ENCODE measurements at regions of chr16 and their contacts with region 1.

Region 1: GRCh38 chr16:85986931-85987749 is 88.2 kb downstream of the IRF8 start:
- DNase-seq: peak; percentile 78
- H3K4me3 Mint-ChIP-seq: peak overlapping the region; percentile 42
- H3K27ac Mint-ChIP-seq: peak overlapping the region; percentile 85
- H3K4me1 Mint-ChIP-seq: peaks cover 59% of the 10 kb centered on the region
- H3K27me3 Mint-ChIP-seq: no peaks in the 10 kb centered on the region

Region 2: DNA sequence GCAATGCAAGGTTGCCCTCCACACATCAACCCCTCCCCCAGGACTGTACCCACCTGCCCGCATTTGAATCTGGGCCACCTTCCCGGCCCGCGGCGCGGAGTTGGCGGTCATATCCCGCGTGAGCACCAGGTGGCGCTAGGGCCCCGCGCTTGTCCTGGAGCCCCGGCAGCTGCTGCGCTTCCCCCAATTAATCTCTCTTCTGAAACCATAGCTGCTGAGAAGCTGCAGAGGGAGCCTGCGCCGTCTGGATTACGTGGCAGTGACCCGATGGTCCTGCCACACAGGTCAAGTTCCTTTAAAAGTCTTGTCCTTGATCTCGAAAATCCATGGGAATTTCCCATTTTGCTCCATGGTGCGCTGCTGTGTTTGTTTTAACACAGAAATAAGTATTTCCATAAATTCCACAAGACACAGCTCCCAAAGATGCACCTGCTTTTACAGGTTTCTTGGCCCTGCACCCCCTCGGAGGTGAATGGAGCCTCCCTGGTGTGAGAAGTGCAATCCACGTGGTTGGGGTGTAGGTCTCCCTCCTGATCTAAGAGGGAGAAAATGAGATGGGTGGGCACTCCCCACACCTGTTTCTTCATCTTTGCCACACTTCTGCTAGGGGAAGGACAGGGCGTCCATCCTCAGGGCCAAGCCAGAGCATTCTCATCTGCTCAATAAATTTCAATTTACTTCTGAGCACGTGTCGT is 165.6 kb before region 1 on chr16:
- intact Hi-C with region 1: loop called (anchors 1 kb)
- DNase-seq: peak; percentile 94
- H3K4me3 Mint-ChIP-seq: no peak overlapping the region
- H3K27ac Mint-ChIP-seq: no peak overlapping the region
- H3K4me1 Mint-ChIP-seq: peaks cover 7% of the 10 kb centered on the region
- H3K27me3 Mint-ChIP-seq: peaks cover 5% of the 10 kb centered on the region

Region 3: GRCh38 chr16:85888405-85889331 is 98.5 kb before region 1 on chr16:
- intact Hi-C with region 1: loop called (anchors 2 kb)
- DNase-seq: peak; percentile 70
- H3K4me3 Mint-ChIP-seq: peak overlapping the region; percentile 52
- H3K27ac Mint-ChIP-seq: peak overlapping the region; percentile 82
- H3K4me1 Mint-ChIP-seq: peaks cover 38% of the 10 kb centered on the region
- H3K27me3 Mint-ChIP-seq: peaks cover 32% of the 10 kb centered on the region

Region 4: GRCh38 chr16:85935974-85936760 is 51.0 kb before region 1 on chr16:
- intact Hi-C with region 1: loop called (anchors 1 kb)
- DNase-seq: peak; percentile 90
- H3K4me3 Mint-ChIP-seq: peak overlapping the region; percentile 60
- H3K27ac Mint-ChIP-seq: peak overlapping the region; percentile 98
- H3K4me1 Mint-ChIP-seq: peaks cover 60% of the 10 kb centered on the region
- H3K27me3 Mint-ChIP-seq: peaks cover 3% of the 10 kb centered on the region

Region 5: GRCh38 chr16:85969159-85969558 is 18.0 kb before region 1 on chr16:
- intact Hi-C with region 1: loop called (anchors 1 kb)
- DNase-seq: no peak
- H3K4me3 Mint-ChIP-seq: peak overlapping the region; percentile 56
- H3K27ac Mint-ChIP-seq: peak overlapping the region; percentile 73
- H3K4me1 Mint-ChIP-seq: peaks cover 25% of the 10 kb centered on the region
- H3K27me3 Mint-ChIP-seq: no peaks in the 10 kb centered on the region

Region 6: DNA sequence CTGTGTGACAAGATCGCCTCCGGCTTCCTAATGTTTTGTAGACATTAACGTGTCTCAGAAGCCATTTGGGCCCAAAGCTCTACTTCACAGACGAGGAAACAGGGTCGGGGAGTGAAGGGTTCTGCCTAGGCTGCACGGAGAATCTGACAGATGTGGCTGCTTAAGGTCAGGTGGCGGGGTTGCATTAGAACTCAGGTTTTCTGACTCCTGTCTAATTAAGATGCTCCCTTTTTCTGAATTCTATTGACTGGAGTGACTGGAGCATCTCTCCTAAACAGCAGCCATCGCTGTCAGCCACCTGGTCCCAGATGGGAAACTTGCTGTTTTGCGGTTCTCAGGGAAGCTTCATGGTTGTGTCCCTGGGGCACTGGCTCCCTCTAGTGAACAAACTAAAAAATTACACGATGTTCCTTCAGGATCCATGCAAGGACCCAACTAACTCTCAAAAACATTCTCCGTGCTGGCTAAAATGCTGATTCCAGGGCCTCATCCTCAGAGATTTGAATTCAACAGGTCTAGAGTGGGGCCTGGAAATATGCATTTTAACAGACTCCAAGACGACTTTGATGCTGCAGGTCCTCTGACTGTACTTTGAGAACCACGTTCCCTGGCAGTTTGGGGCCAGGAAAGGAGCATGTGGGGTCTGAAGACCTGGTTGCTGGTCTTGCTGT is 29.2 kb after region 1 on chr16:
- intact Hi-C with region 1: loop called (anchors 2 kb)
- DNase-seq: peak; percentile 79
- H3K4me3 Mint-ChIP-seq: no peak overlapping the region
- H3K27ac Mint-ChIP-seq: no peak overlapping the region
- H3K4me1 Mint-ChIP-seq: peaks cover 7% of the 10 kb centered on the region
- H3K27me3 Mint-ChIP-seq: peaks cover 23% of the 10 kb centered on the region

Measured in activated CD4-positive, alpha-beta T cell treated with anti-CD3 and anti-CD28 coated beads, Interleukin-2, amount 10 ng/mL, durations not matched to agents 24 days and 14 days (primary cell).